Activated T-helper 2 cell treated with anti-CD3 and anti-CD28 coated beads, Interferon-gamma antibody, Interleukin-2, Interleukin-4, amounts not matched to agents 10 μg/mL and 5 μg/mL and 100 μg/mL, durations not matched to agents 14 hours and 24 hours and 36 hours (primary cell): ENCODE measurements at regions of chr1 and their contacts with region 1.

Region 1: DNA sequence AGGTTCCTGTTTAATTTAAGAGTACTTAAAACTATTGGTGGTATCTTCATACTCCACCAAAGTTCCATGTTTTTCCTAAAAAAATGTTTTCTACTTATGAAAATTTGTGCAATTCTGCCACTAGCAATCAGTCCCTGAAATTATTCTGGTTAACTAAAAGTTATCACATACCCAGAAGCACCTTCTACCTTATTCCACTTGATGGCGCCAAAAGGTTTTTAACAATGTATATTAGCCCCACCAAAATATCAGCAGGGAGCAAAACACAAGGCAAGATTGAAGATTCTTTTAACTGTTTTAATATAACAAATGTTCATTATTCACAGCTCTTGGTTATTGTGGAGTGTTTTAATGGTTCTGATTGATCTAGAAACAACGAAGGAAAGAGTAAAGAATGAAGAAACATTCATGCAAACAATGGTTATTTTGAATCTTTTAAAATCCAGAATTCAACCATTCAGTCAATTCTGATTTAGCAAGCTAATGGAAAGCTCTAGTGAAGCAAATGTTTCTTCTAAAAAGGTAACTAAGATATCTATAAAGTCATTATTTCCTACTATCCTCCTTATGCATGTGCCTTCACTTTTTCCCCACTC is 67.2 kb downstream of the TTLL7 start:
- DNase-seq: no peak
- H3K4me3 Mint-ChIP-seq: no peak overlapping the region
- H3K27ac Mint-ChIP-seq: no peak overlapping the region
- H3K4me1 Mint-ChIP-seq: no peaks in the 10 kb centered on the region
- H3K27me3 Mint-ChIP-seq: peaks cover 18% of the 10 kb centered on the region

Region 2: GRCh38 chr1:84122780-84123382 is 191.1 kb after region 1 on chr1:
- intact Hi-C with region 1: loop called (anchors 1 kb)
- DNase-seq: no peak
- H3K4me3 Mint-ChIP-seq: no peak overlapping the region
- H3K27ac Mint-ChIP-seq: no peak overlapping the region
- H3K4me1 Mint-ChIP-seq: no peaks in the 10 kb centered on the region
- H3K27me3 Mint-ChIP-seq: peaks cover 3% of the 10 kb centered on the region

Region 3: GRCh38 chr1:84433258-84434080 is 501.7 kb after region 1 on chr1:
- intact Hi-C with region 1: loop called (anchors 2 kb)
- DNase-seq: peak; percentile 54
- H3K4me3 Mint-ChIP-seq: peak overlapping the region; percentile 18
- H3K27ac Mint-ChIP-seq: no peak overlapping the region
- H3K4me1 Mint-ChIP-seq: peaks cover 3% of the 10 kb centered on the region
- H3K27me3 Mint-ChIP-seq: no peaks in the 10 kb centered on the region

Region 4: DNA sequence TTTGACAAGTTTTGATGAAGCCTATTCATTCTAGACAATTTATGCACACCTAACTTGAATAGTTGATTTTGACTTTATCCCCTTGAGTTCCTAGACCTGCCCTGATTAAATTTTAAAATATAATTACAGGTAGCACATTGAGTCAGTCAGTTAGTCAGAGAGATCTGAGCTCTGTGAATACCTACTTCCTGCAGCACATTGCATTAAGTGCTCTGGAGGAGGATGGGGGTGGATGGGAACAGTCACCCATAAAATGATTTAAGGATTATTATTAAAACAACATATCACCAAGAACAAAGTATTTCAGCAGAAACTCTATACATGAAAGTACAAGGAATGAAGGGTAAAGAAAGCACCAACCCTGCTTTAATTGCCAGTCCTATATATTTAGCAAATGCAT is 535.5 kb after region 1 on chr1:
- intact Hi-C with region 1: no loop called
- DNase-seq: no peak
- H3K4me3 Mint-ChIP-seq: no peak overlapping the region
- H3K27ac Mint-ChIP-seq: no peak overlapping the region
- H3K4me1 Mint-ChIP-seq: no peaks in the 10 kb centered on the region
- H3K27me3 Mint-ChIP-seq: peaks cover 54% of the 10 kb centered on the region

Region 5: GRCh38 chr1:84753516-84754385 is 822.0 kb after region 1 on chr1:
- intact Hi-C with region 1: loop called (anchors 10 kb)
- DNase-seq: peak; percentile 64
- H3K4me3 Mint-ChIP-seq: no peak overlapping the region
- H3K27ac Mint-ChIP-seq: no peak overlapping the region
- H3K4me1 Mint-ChIP-seq: peaks cover 7% of the 10 kb centered on the region
- H3K27me3 Mint-ChIP-seq: peaks cover 8% of the 10 kb centered on the region